Activated B cell treated with CpG ODN at 0.5 μM for 24 hours (primary cell): ENCODE measurements at regions of chr1 and their contacts with region 1.

Region 1: GRCh38 chr1:202304375-202304774 is 37.4 kb downstream of the UBE2T start:
- DNase-seq: no peak
- ATAC-seq: no peak
- H3K4me3 Mint-ChIP-seq: no peak overlapping the region
- H3K27ac Mint-ChIP-seq: no peak overlapping the region
- H3K4me1 Mint-ChIP-seq: no peaks in the 10 kb centered on the region
- H3K27me3 Mint-ChIP-seq: peaks cover 2% of the 10 kb centered on the region
- CTCF ChIP-seq: no peak

Region 2: GRCh38 chr1:202710070-202711045 is 406.0 kb after region 1 on chr1 and contains the start of gene SYT2:
- CTCF ChIA-PET with region 1: no interaction called
- POLR2A ChIA-PET with region 1: interaction called, 12 read pairs
- intact Hi-C with region 1: no loop called
- DNase-seq: no peak
- ATAC-seq: peak; percentile 34
- H3K4me3 Mint-ChIP-seq: peak within 1 kb of the TSS; percentile 30
- H3K27ac Mint-ChIP-seq: no peak within 1 kb of the TSS
- H3K4me1 Mint-ChIP-seq: peaks cover 6% of the 10 kb centered on the region
- H3K27me3 Mint-ChIP-seq: peaks cover 65% of the 10 kb centered on the region
- CTCF ChIP-seq: no peak
- total RNA-seq, gene SYT2: not detected in 2 replicates

Region 3: DNA sequence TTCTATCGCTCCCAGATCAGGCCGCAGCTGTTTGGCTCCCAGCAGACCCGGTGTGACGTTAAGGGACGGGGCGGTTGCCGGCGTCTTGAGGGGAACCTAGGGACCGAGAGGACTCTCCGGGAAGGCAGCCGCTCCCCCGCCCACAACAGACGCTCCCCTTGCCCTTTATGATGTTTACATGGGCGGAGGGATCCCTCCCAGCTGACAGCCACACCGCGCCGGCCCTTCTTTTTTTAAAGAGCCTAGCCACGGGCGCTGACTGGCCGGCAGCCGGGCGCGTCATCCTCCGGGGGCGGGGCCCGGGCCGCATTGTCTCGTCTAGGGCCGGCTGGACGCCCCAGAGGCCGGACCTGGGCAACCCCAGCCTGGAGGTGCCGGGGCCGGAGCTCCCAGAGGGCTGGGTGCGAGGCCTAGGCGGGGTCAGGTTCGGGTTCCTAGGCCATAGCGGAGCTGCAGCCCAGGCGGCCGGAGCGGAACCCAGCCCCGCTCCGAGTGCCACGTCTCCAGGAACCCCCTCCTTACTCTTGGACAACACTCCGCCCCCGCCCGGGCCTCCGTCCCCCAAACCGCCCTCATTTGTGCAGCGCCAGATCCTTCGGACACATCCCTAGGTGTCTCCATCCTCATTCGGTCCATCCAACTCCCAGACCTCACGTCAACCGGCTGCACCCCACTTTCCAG is 506.4 kb after region 1 on chr1 and contains the start of gene PCAT6:
- CTCF ChIA-PET with region 1: no interaction called
- POLR2A ChIA-PET with region 1: interaction called, 10 read pairs
- intact Hi-C with region 1: no loop called
- DNase-seq: peak; percentile 88
- ATAC-seq: peak; percentile 82
- H3K4me3 Mint-ChIP-seq: peak within 1 kb of the TSS; percentile 93
- H3K27ac Mint-ChIP-seq: peak within 1 kb of the TSS; percentile 80
- H3K4me1 Mint-ChIP-seq: peaks cover 36% of the 10 kb centered on the region
- H3K27me3 Mint-ChIP-seq: no peaks in the 10 kb centered on the region
- CTCF ChIP-seq: no peak
- total RNA-seq, gene PCAT6: 0.67 and 0.83 TPM in 2 replicates